ENCODE measurements at regions of chr2 and their contacts with region 1.

Region 1: GRCh38 chr2:161199912-161200701 is 39.9 kb downstream of the TANK start:
- DNase-seq: no peak
- ATAC-seq: no peak
- H3K4me3 ChIP-seq: no peak overlapping the region
- H3K27ac ChIP-seq: no peak overlapping the region
- H3K4me1 ChIP-seq: no peaks in the 10 kb centered on the region; the same call in 1 of the 2 replicates
- H3K27me3 ChIP-seq: no peaks in the 10 kb centered on the region
- CTCF ChIP-seq: no peak

Region 2: GRCh38 chr2:161190050-161190449 is 10.1 kb before region 1 on chr2:
- CTCF ChIA-PET with region 1: no interaction called
- POLR2A ChIA-PET with region 1: interaction called, 10 read pairs
- in situ Hi-C with region 1: no loop called
- intact Hi-C with region 1: no loop called
- DNase-seq: no peak
- ATAC-seq: no peak
- H3K4me3 ChIP-seq: no peak overlapping the region
- H3K27ac ChIP-seq: no peak overlapping the region
- H3K4me1 ChIP-seq: no peaks in the 10 kb centered on the region
- H3K27me3 ChIP-seq: no peaks in the 10 kb centered on the region
- CTCF ChIP-seq: no peak

Region 3: DNA sequence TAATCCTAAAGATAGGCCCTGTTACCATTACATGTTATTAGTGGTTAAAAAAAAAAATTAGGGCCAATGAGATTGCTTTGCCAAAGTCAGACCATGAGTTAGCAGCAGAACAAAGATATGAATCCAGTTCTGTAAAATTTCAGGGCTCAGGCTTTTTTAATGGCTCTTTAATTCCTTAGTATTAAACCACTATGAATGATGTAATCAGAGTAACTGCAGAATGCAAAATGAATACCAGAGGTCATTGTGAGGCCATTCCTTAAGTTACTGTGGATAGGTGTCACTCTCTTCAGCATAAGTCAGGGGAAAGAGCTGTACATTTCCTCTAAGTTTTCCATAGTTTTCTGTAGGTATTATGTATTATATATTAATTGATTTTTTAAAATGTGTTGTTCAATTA is 173.8 kb after region 1 on chr2:
- CTCF ChIA-PET with region 1: no interaction called
- POLR2A ChIA-PET with region 1: no interaction called
- in situ Hi-C with region 1: no loop called
- intact Hi-C with region 1: no loop called
- DNase-seq: no peak
- ATAC-seq: no peak
- H3K4me3 ChIP-seq: no peak overlapping the region
- H3K27ac ChIP-seq: no peak overlapping the region; the same call in 1 of the 2 replicates
- H3K4me1 ChIP-seq: peaks cover 3% of the 10 kb centered on the region; the same call in 1 of the 2 replicates
- H3K27me3 ChIP-seq: no peaks in the 10 kb centered on the region
- CTCF ChIP-seq: no peak

Measured in Panc1 (cell line).